Heart left ventricle (tissue), 16 donors: ENCODE measurements at regions of chr15 and their contacts with region 1.

Region 1: DNA sequence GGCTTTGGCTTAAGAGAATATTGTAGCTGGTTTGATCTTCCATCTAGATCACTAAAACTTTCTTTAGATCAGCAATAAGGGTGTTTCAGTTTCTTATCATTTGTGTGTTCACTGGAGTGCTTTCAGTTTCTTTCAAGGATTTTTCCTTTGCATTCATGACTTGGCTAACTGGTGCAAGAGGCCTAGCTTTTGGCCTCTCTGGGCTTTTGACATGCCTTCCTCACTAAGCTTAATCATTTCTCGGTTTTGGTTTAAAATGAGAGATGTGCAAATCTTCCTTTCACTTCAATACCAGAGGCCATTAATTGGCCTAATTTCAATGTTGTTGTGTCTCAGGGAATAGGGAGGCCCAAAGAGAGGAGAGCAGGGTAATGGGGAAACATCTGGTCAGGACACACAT is 30.3 kb upstream of the CCNB2 start:
- DNase-seq: no peak
- ATAC-seq: no peak
- H3K4me3 ChIP-seq: no peak overlapping the region
- H3K27ac ChIP-seq: no peak overlapping the region
- H3K4me1 ChIP-seq: no peaks in the 10 kb centered on the region
- H3K27me3 ChIP-seq: no peaks in the 10 kb centered on the region
- CTCF ChIP-seq: no peak
- POLR2A ChIP-seq: no peak

Region 2: DNA sequence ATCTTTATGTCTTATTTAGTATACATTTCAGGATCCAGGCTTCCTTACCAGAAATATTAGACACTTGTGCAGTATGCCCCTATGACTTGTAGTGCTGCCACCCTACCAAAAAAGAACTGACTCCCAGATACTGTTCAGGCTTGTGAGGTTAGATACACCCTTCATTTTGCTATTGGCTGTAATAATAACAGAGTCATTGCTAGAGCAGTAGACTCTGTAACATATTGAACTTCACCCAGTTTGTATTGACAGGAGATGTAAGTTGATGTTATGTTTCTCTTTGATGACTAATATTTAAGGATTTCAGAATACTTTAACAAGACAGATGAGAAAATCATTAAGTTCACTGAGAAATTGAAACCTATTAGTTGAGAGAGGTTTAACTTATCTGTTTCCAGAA is 54.3 kb before region 1 on chr15:
- intact Hi-C with region 1: loop called in 1 of 10 experiments (anchors 10 kb)
- DNase-seq: no peak
- ATAC-seq: no peak
- H3K4me3 ChIP-seq: no peak overlapping the region
- H3K27ac ChIP-seq: no peak overlapping the region
- H3K4me1 ChIP-seq: peaks cover 0 to 5% (median 0%) of the 10 kb centered on the region in 12 donors
- H3K27me3 ChIP-seq: no peaks in the 10 kb centered on the region
- CTCF ChIP-seq: no peak
- POLR2A ChIP-seq: no peak

Region 3: DNA sequence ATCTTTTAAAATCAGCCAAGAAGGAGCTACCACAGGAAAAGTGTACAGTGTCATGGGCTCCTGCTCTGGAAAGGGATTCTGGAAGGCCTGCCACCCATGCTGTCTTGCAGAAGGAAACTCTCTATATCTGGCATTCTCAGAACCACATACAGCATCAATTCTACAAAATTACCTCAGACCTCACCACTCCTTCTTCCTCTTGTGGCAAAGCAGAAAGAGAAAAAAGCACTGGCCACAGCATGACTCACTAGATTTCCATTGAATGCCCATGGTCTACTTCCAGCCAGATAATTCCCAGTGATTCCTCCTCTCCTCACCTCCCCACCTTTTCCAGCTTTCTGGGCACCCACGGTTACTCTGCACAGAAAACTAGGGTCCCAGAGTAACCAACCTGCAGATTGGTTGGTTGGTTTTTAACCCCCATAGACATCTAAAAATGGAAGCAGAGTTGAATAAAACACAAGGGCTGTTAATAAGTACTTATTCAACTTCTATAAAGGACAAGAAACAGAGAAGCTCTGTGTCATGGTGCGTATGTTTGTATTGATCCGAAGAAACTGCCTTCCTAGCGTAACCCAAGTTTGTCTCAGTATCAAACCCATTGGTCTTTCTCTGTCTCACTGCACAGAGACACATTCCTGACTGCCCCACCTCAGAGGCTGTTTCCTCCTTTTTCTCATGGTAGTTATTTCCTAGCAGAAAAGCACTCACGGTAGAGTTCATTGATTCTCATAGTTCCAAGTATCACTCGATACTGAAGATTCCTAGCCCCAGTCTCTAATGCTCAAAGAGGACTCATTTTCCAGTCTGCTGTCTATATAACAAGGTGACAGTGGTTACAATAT is 199.7 kb after region 1 on chr15:
- intact Hi-C with region 1: no loop called
- DNase-seq: no peak
- ATAC-seq: no peak
- H3K4me3 ChIP-seq: no peak overlapping the region
- H3K27ac ChIP-seq: peak overlapping the region in 1 of 12 donors; percentile 3
- H3K4me1 ChIP-seq: peaks cover 0 to 20% (median 2%) of the 10 kb centered on the region in 12 donors
- H3K27me3 ChIP-seq: no peaks in the 10 kb centered on the region
- CTCF ChIP-seq: no peak
- POLR2A ChIP-seq: no peak